Activated CD4-positive, alpha-beta T cell treated with anti-CD3 and anti-CD28 coated beads for 36 hours (primary cell): ENCODE measurements at regions of chr18 and their contacts with region 1.

Region 1: GRCh38 chr18:2337552-2338141 is 233.7 kb downstream of the METTL4 start:
- DNase-seq: peak; percentile 70
- ATAC-seq: peak; percentile 65
- H3K4me3 Mint-ChIP-seq: no peak overlapping the region
- H3K27ac Mint-ChIP-seq: no peak overlapping the region
- H3K4me1 Mint-ChIP-seq: no peaks in the 10 kb centered on the region
- H3K27me3 Mint-ChIP-seq: peaks cover 9% of the 10 kb centered on the region

Region 2: DNA sequence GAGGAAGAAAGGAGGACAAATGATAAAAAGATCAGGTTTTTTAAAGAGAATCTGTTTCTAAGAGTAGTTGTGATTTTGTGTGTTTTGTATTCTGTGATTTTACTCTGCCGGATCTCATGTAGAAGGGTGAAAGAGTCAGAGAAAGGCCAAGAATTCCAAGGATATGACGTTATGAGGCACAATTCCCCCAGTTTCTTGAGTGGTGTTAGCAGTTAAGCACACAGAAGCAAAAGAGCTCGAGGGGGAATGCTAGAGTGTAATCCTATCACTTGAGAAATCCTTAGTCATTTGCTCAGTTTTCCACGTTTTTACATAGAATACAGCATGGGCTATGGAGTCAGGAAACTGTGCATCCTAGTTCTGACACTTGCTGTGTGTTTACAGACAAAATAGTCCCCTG is 198.8 kb after region 1 on chr18:
- CTCF ChIA-PET with region 1: interaction called, 17 read pairs
- POLR2A ChIA-PET with region 1: no interaction called
- intact Hi-C with region 1: no loop called
- DNase-seq: no peak
- ATAC-seq: no peak
- H3K4me3 Mint-ChIP-seq: no peak overlapping the region
- H3K27ac Mint-ChIP-seq: no peak overlapping the region
- H3K4me1 Mint-ChIP-seq: no peaks in the 10 kb centered on the region
- H3K27me3 Mint-ChIP-seq: no peaks in the 10 kb centered on the region

Region 3: GRCh38 chr18:2547477-2548087 is 209.9 kb after region 1 on chr18:
- CTCF ChIA-PET with region 1: interaction called, 44 read pairs
- POLR2A ChIA-PET with region 1: no interaction called
- intact Hi-C with region 1: loop called (anchors 1 kb)
- DNase-seq: no peak
- ATAC-seq: peak; percentile 58
- H3K4me3 Mint-ChIP-seq: no peak overlapping the region
- H3K27ac Mint-ChIP-seq: no peak overlapping the region
- H3K4me1 Mint-ChIP-seq: peaks cover 7% of the 10 kb centered on the region
- H3K27me3 Mint-ChIP-seq: no peaks in the 10 kb centered on the region